ENCODE measurements at regions of chr1 and their contacts with region 1.

Region 1: DNA sequence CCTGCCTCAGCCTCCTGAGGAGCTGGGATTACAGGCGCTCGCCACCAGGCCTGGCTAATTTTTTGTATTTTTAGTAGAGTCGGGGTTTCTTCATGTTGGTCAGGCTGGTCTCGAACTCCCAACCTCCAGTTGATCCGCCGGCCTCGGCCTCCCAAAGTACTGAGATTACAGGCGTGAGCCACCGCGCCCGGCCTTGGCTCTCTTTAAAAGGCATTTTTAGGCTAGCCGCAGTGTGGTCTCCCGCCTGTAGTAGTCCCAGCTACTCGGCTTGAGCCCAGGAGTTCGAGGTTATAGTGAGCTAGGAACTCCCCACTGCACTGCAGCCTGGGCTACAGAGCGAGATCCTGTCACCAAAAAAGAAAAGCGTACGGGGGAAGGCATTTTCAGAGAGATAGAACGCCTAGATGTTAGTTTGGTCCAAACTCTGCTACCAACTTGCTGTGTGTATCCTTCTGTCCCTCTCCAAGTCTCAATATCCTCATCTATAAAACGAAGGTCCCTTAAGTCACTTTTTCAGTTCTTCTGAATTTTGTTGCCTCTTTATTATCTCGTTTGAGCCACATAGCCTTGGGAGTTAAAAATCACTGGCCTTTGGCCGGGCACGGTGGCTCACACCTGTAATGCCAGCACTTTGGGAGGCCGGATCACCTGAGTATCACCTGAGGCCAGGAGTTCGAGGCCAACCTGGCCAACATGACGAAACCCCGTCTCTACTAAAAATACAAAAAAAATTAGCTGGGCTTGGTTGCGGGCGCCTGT is 734 bp downstream of the MED18 start:
- DNase-seq: peak; percentile 61
- H3K4me3 Mint-ChIP-seq: peak overlapping the region; percentile 95
- H3K27ac Mint-ChIP-seq: peak overlapping the region; percentile 97
- H3K4me1 Mint-ChIP-seq: peaks cover 44% of the 10 kb centered on the region
- H3K27me3 Mint-ChIP-seq: no peaks in the 10 kb centered on the region

Region 2: DNA sequence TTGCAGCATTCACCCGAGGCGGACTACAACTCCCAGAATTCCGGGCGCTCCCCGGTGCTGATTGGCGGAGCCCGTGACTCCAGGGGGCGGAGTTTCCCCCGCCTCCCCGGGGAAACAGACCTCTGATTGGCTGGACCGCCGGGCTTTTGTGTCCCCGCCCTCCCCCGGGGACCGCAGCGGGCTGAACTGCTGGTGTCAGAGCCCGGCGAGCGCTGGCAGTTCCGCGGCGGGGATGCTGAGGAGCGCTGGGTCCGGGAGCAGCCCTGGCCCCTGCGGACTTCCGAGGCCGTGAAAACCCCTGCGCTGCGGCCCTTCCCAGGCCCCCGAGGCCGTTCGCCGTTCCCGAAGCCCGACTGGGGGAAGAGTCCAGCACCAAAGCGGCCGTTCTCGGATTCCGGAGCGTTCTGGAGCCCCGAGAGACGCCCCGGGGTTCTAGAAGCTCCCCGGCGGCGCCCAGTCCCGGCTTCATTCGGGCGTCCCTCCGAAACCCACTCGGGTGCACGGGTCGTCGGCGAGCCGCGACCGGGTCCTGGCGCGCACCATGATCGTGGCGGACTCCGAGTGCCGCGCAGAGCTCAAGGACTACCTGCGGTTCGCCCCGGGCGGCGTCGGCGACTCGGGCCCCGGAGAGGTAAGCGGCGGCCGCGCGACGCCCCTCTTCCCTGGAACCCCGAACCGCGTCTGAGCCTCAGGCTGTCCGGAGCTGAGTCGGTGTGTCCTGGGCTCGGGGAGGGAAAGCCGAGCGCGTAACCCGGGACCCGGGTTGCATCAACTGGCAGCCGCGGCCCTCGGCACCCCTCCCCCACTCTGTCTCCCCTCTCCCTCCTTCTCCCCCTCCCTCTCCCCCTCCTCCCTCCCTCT is 70.0 kb before region 1 on chr1 and contains the start of gene SESN2:
- CTCF ChIA-PET with region 1: interaction called, 9 read pairs
- POLR2A ChIA-PET with region 1: interaction called, 87 read pairs
- DNase-seq: peak; percentile 100
- H3K4me3 Mint-ChIP-seq: peak within 1 kb of the TSS; percentile 71
- H3K27ac Mint-ChIP-seq: peak within 1 kb of the TSS; percentile 83
- H3K4me1 Mint-ChIP-seq: peaks cover 53% of the 10 kb centered on the region
- H3K27me3 Mint-ChIP-seq: no peaks in the 10 kb centered on the region
- total RNA-seq, gene SESN2: 22.8 to 23.9 TPM

Region 3: GRCh38 chr1:28280501-28280900 is 49.1 kb before region 1 on chr1:
- CTCF ChIA-PET with region 1: no interaction called
- POLR2A ChIA-PET with region 1: no interaction called
- DNase-seq: no peak
- H3K4me3 Mint-ChIP-seq: no peak overlapping the region
- H3K27ac Mint-ChIP-seq: no peak overlapping the region
- H3K4me1 Mint-ChIP-seq: peaks cover 11% of the 10 kb centered on the region
- H3K27me3 Mint-ChIP-seq: no peaks in the 10 kb centered on the region

Region 4: DNA sequence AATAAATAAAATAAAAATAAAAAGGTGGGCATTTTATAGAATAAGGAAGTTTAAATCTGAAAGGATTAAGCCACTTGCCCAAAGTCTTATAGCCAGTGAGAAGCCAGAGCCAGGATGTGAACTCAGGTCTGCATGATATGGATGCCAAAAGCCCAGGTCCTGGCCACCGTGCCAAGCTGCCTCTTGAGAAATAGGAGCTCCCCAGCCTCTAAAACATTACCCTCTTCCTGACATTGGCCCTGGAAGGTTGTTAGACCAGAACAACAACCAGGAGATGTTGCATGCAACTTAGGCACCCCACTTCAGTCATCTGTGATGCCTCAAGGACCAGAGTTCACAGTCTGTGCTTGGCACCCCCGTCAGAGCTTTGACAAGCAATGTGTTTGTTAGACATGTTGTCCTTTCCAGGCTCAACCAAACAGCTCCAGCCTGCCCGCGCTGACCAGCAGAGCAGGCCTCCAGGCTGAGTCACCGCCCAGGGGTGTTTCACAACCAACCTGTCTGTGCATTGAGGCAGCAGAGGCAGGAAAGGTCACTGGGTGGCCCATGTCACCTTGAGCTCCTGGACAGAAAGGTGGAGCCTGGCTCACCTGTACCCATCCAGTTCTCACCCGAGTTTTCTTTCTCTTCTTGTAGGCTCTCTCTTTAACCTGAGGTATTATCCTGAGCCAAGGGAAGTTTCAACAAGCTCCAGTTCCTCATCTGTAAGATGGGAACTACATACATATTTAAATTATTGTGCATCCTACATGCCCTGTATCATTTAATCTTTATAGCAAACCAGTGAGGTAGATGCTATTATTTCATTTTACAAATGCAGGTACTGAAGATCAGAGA is 15.6 kb before region 1 on chr1:
- CTCF ChIA-PET with region 1: interaction called, 5 read pairs
- POLR2A ChIA-PET with region 1: interaction called, 11 read pairs
- DNase-seq: no peak
- H3K4me3 Mint-ChIP-seq: no peak overlapping the region
- H3K27ac Mint-ChIP-seq: no peak overlapping the region
- H3K4me1 Mint-ChIP-seq: no peaks in the 10 kb centered on the region
- H3K27me3 Mint-ChIP-seq: peaks cover 6% of the 10 kb centered on the region

Region 5: DNA sequence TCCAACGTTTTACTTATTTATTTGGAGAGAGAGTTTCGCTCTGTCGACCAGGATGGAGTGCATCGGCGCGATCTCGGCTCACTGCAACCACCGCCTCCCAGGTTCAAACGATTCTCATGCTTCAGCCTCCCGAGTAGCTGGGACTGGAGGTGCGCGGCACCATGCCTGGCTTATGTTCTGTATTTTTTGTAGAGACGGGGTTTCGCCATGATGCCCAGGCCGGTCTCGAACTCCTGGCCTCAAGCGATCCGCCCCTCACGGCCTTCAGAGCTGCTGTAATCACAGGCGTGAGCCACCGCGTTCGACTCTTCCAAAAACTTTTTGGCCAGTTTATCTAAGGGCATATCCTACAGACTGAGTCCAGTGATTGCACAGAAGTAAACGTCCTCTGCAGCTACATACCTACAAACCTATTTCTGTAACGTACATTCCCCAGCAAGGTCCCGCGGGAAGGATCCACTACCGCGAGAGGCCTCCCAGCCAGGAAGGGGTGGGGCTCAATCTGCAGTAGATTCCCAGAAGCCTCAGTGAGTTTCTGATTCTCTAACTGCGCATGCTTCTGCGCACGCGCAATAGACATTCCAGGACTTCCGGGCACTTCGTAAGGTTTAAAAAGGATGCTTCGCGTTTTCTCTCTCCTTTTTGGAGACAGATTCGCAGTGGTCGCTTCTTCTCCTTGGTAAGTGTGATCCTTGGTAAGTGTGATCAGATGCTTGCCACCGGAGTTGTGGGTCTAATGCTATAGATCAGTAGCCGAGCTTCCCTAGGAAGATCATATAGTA is 176.0 kb after region 1 on chr1 and contains the start of gene RCC1:
- CTCF ChIA-PET with region 1: no interaction called
- POLR2A ChIA-PET with region 1: interaction called, 32 read pairs
- DNase-seq: peak; percentile 97
- H3K4me3 Mint-ChIP-seq: peak within 1 kb of the TSS; percentile 98
- H3K27ac Mint-ChIP-seq: peak within 1 kb of the TSS; percentile 97
- H3K4me1 Mint-ChIP-seq: peaks cover 42% of the 10 kb centered on the region
- H3K27me3 Mint-ChIP-seq: no peaks in the 10 kb centered on the region
- total RNA-seq, gene RCC1: 47.6 to 50.7 TPM

Region 6: DNA sequence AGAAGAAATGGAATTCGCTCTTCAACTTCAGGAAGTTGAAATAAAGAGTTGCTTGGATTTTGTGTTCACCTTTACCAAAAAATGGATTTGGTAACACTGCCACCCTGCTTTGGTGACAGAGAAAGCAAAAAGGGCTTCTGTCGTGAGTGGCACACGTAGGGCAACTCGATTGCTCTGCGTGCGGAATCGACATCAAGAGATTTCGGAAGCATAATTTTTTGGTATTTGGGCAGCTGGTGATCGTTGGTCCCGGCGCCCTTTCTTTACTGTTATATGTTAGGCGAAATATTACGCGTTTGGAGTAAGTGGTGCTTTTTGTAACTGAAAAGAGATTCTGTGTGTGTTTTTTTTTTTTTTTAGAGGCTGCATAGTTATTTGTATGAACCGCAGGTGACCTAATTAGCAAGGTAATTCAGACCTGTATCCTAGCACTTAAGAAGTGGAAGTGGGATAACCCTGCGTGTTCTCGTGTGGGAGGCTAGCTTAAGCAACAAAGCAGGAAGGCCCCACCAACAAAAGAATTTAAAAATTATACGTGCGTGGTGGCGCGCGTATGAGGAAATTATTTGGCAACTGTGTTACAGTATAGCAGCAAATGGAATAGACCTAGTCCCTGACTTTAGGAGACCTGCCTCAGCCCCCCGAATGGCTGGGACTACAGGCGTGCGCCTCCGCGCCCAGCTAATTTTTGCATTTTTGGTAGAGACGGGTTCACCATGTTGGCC is 319.1 kb after region 1 on chr1 and contains the start of gene RNU11:
- CTCF ChIA-PET with region 1: no interaction called
- POLR2A ChIA-PET with region 1: interaction called, 15 read pairs
- DNase-seq: peak; percentile 90
- H3K4me3 Mint-ChIP-seq: peak within 1 kb of the TSS; percentile 79
- H3K27ac Mint-ChIP-seq: peak within 1 kb of the TSS; percentile 99
- H3K4me1 Mint-ChIP-seq: peaks cover 33% of the 10 kb centered on the region
- H3K27me3 Mint-ChIP-seq: no peaks in the 10 kb centered on the region
- total RNA-seq, gene RNU11: not detected

Region 7: GRCh38 chr1:28736450-28737306 is 407.1 kb after region 1 on chr1 and contains the start of gene YTHDF2:
- CTCF ChIA-PET with region 1: interaction called, 3 read pairs
- POLR2A ChIA-PET with region 1: interaction called, 10 read pairs
- DNase-seq: peak; percentile 98
- H3K4me3 Mint-ChIP-seq: peak within 1 kb of the TSS; percentile 97
- H3K27ac Mint-ChIP-seq: peak within 1 kb of the TSS; percentile 94
- H3K4me1 Mint-ChIP-seq: peaks cover 38% of the 10 kb centered on the region
- H3K27me3 Mint-ChIP-seq: no peaks in the 10 kb centered on the region
- total RNA-seq, gene YTHDF2: 69.9 to 70.9 TPM